ENCODE measurements at regions of chr5 and their contacts with region 1.

Region 1: GRCh38 chr5:103139264-103139865 is 19.3 kb downstream of the PPIP5K2 start:
- DNase-seq: peak; percentile 88
- H3K4me3 Mint-ChIP-seq: no peak overlapping the region
- H3K27ac Mint-ChIP-seq: no peak overlapping the region
- H3K4me1 Mint-ChIP-seq: no peaks in the 10 kb centered on the region
- H3K27me3 Mint-ChIP-seq: no peaks in the 10 kb centered on the region
- CTCF ChIP-seq: peak; percentile 97

Region 2: DNA sequence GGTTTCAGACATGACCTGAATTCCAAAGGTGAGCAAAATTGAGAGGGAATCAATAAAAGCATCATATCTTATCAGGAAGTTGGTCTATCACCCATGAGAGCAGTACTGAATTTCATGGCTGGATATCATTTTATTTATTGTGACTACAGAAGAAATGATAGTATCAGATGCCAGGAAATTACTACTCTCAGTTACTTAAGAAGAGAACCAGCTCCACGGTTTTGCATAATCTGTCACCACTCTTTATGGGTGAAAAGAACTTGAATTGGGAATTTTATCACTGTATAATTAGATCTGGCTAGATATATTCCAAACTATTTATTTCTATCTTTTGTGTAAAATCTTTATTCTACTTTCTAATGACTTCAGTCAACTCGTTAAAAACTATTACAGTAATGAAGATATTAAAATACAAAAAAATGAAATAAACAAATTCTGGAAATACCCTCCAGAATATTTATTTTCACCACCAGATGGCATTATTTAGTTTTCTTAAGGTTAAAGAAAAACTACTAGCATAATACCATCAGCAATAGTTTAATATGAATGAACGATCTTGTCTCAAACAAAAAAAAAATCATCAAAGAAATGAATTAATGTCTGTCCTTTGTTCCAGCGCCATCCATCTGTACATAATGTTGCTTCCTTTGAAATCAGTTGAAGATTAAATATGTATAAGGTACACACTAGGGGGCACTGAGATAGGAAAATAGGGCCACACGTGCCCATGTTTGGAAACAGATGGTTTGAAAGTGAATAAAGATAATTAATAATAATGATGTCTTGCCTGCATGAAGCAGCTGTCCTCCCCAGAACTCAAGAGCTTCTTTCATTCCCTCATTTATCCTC is 555.9 kb before region 1 on chr5:
- CTCF ChIA-PET with region 1: no interaction called
- intact Hi-C with region 1: loop called (anchors 1 kb)
- DNase-seq: no peak
- H3K4me3 Mint-ChIP-seq: no peak overlapping the region
- H3K27ac Mint-ChIP-seq: no peak overlapping the region
- H3K4me1 Mint-ChIP-seq: no peaks in the 10 kb centered on the region
- H3K27me3 Mint-ChIP-seq: no peaks in the 10 kb centered on the region
- CTCF ChIP-seq: peak; percentile 68

Region 3: GRCh38 chr5:102778478-102778877 is 360.9 kb before region 1 on chr5:
- CTCF ChIA-PET with region 1: no interaction called
- intact Hi-C with region 1: loop called (anchors 1 kb)
- DNase-seq: no peak
- H3K4me3 Mint-ChIP-seq: no peak overlapping the region
- H3K27ac Mint-ChIP-seq: no peak overlapping the region
- H3K4me1 Mint-ChIP-seq: peaks cover 9% of the 10 kb centered on the region
- H3K27me3 Mint-ChIP-seq: no peaks in the 10 kb centered on the region
- CTCF ChIP-seq: no peak

Region 4: DNA sequence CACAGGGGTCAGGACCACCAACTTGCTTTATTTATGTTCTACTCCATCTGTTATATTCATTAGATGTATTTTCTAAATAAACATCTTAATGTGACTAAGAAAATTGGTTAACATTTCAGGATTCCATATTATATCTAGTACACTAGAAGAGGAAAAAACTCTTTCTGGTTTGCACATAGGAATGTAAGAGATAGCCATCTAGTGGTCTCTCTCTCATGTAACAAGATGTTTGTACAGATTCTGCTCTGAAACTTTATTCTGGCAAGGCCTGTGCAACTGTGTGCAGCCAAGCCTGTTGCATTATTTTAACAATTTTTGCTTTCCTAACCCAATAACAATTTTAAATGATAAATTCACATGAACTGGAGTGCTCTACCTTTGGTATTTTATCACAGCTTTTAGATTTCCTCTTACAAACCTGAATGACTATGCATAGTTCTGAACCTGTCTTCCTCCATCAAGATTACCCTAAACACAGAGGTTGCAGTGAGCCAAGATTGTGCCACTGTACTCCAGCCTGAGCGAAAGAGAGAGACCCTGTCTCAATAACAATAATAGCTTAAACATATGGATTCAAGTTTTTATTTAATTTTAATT is 167.6 kb before region 1 on chr5:
- CTCF ChIA-PET with region 1: no interaction called
- intact Hi-C with region 1: loop called (anchors 5 kb)
- DNase-seq: no peak
- H3K4me3 Mint-ChIP-seq: no peak overlapping the region
- H3K27ac Mint-ChIP-seq: no peak overlapping the region
- H3K4me1 Mint-ChIP-seq: no peaks in the 10 kb centered on the region
- H3K27me3 Mint-ChIP-seq: no peaks in the 10 kb centered on the region
- CTCF ChIP-seq: no peak

Region 5: DNA sequence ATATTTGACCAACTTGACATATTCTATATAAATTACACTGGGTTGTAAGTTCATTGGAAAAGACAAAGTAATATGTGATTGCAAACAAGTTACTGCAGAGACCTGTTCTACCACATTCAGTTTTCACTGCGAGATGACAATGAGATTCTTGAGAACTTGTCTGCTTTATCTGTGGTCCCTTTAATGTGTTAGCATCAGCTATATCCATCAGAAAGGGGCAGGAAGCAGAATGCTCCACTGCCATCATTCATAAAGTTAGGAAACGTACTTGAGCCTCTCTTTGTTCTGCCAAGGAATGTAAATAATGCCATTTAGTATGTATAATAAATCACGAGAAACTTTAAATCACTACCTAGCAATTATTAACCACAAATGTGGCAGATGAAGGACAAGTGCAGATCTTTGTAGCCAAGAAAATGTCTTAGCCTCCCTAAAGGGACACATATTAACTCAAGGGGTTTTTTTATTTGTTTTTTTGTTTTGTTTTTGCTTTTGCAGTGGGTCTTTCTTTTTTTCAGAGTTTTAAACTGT is 78.9 kb before region 1 on chr5:
- CTCF ChIA-PET with region 1: no interaction called
- intact Hi-C with region 1: loop called (anchors 2 kb)
- DNase-seq: peak; percentile 4
- H3K4me3 Mint-ChIP-seq: no peak overlapping the region
- H3K27ac Mint-ChIP-seq: no peak overlapping the region
- H3K4me1 Mint-ChIP-seq: peaks cover 44% of the 10 kb centered on the region
- H3K27me3 Mint-ChIP-seq: no peaks in the 10 kb centered on the region
- CTCF ChIP-seq: no peak

Measured in Calu3 (cell line).